ENCODE measurements at regions of chr12 and their contacts with region 1.

Region 1: DNA sequence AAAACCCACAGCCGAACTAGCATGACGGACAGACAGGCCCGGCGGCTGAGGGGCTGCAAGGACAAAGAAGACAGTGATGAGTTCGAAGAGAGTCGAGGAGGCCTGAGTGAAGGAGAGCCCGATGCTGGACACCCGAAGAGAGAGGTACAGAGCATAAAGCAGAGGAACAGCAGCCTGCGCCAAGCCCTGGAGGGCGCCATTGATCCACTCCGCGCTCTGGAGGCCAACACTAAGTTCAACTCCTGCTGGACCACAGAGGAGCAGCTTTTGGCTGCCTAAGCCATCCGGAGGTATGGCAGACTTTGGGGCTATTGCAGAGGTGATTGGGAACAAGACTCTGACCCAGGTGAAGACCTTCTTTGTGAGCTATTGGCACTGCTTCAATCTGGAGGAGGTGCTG is 7.8 kb upstream of the PLXNC1 start:
- DNase-seq: peak; percentile 48
- H3K4me3 ChIP-seq: no peak overlapping the region
- H3K27ac ChIP-seq: no peak overlapping the region
- H3K4me1 ChIP-seq: no peaks in the 10 kb centered on the region
- H3K27me3 ChIP-seq: no peaks in the 10 kb centered on the region
- CTCF ChIP-seq: peak; percentile 28

Region 2: DNA sequence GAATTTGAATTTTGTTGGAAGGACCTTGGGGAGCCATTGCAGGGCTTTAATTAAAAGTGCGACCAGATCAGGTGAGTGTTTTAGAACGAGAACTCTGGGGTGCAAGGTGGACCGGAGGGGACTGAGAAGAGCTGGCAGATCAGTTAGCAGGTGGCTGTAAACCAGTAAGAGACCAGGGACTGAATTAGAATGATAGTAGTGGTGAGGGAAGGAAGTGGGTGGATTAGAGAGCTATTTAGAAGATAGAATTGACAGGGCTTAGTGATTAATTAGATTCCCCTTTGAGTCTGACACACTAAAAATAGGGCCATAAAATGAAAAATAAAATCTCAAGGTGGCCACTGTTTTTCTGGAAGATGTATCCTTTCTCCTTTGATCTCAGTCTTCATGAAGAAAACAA is 52.6 kb after region 1 on chr12:
- intact Hi-C with region 1: no loop called
- DNase-seq: no peak
- H3K4me3 ChIP-seq: no peak overlapping the region
- H3K27ac ChIP-seq: no peak overlapping the region
- H3K4me1 ChIP-seq: no peaks in the 10 kb centered on the region
- H3K27me3 ChIP-seq: no peaks in the 10 kb centered on the region
- CTCF ChIP-seq: no peak

Region 3: DNA sequence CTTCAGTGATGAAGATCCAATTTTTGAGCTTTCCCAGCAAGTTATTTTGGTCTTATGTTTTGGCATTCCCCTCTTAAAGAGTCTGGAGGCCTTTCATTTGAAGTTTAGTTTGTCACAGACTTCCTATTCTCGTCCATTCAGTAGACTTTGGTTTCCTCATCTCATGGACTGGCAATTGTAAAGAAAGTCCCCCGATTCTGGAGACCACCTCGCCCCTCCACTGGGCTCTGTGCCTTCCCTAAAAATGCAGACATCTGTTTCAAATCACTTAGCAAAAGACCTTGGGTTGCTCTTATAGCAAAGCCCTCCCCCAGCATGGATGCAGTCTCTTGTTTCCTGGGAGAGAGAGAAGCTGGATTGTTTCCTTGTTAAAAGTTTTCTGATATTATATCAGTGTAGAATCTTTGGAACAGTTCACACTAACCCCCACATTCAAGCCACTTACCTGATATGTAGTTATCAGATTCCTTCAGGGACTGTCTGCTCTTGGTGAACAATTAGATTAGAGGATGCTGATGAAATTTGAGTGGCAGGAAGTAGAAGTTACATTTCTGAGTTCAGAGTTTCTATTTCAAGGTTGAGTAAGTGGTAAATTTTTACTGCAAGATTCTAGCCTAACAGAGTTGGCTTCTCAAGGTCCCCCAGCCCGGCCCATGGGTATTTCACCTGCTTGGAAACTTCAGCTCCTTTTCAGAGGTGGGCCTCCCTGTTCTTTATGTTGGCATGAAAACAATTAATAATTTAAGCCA is 64.1 kb after region 1 on chr12:
- intact Hi-C with region 1: loop called (anchors 5 kb)
- DNase-seq: no peak
- H3K4me3 ChIP-seq: no peak overlapping the region
- H3K27ac ChIP-seq: no peak overlapping the region
- H3K4me1 ChIP-seq: peaks cover 3% of the 10 kb centered on the region
- H3K27me3 ChIP-seq: no peaks in the 10 kb centered on the region
- CTCF ChIP-seq: no peak

Measured in colonic mucosa (tissue), 4 donors.